Activated naive CD8-positive, alpha-beta T cell treated with anti-CD3 and anti-CD28 coated beads, Interleukin-2, amount 10 ng/mL, durations not matched to agents 7 days and 5 days (primary cell): ENCODE measurements at regions of chr4 and their contacts with region 1.

Region 1: GRCh38 chr4:67545199-67546003 is at the start of gene CENPC:
- DNase-seq: peak; percentile 89
- ATAC-seq: peak; percentile 97
- H3K4me3 Mint-ChIP-seq: peak within 1 kb of the TSS; percentile 99
- H3K27ac Mint-ChIP-seq: peak within 1 kb of the TSS; percentile 99
- H3K4me1 Mint-ChIP-seq: peaks cover 28% of the 10 kb centered on the region
- H3K27me3 Mint-ChIP-seq: peaks cover 2% of the 10 kb centered on the region
- total RNA-seq, gene CENPC: 50.0 to 50.6 TPM

Region 2: DNA sequence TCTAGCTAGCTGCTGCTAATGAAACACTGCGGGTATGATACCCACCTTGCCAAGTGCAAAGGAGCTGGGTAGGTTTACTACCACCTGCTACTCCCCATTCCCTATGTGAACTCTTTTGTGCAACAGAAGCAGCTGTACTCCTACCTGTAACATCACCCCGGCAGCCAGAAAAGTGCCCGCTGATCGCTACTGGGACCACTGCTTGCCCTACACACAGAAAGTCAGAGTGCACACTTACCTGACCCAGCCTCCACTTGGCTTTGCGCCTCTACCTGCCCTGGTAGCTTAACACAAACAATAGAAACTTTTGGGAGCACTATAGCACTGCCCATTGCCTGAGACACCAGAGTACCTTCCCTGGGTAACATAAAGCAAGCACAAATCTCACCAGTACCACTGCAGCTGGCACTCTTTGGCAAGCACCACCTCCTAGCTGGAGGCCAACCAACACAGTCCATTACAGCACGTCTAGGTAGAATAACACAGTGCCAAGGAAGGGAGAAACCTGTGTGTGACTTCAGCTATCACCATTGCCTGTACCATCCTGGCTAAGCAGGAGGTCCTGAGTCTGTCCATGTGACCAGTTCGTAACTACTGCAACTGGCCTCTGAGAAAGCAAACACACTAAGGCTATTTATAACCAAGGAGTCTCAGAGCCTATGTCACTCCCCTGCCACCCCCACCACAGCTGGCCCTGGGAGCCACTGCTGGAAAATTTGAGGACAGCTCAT is 80.2 kb before region 1 on chr4:
- POLR2A ChIA-PET with region 1: no interaction called
- DNase-seq: no peak
- ATAC-seq: no peak
- H3K4me3 Mint-ChIP-seq: no peak overlapping the region
- H3K27ac Mint-ChIP-seq: no peak overlapping the region
- H3K4me1 Mint-ChIP-seq: no peaks in the 10 kb centered on the region
- H3K27me3 Mint-ChIP-seq: no peaks in the 10 kb centered on the region

Region 3: DNA sequence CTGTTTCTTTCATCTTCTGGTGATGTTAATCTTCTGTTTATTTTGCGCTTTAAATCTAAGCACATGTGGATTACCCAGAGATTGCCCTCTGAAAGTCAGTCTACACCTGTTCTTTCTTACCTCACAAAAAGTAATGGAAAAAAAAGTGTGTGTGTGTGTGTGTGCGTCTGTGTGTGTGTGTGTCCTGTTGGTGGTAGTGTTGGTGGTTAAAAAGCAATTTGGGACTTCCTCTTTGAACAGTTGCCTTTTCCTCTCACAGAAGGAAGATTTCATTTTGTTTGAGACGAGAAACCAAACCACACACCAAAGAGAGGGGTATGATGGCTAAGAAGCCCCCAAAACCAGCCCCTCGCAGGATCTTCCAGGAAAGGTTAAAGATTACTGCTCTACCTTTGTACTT is 13.1 kb after region 1 on chr4 and contains the start of gene STAP1:
- POLR2A ChIA-PET with region 1: interaction called, 18 read pairs
- DNase-seq: no peak
- ATAC-seq: peak; percentile 76
- H3K4me3 Mint-ChIP-seq: peak within 1 kb of the TSS; percentile 94
- H3K27ac Mint-ChIP-seq: peak within 1 kb of the TSS; percentile 92
- H3K4me1 Mint-ChIP-seq: peaks cover 38% of the 10 kb centered on the region
- H3K27me3 Mint-ChIP-seq: no peaks in the 10 kb centered on the region
- total RNA-seq, gene STAP1: 27.8 to 28.4 TPM

Region 4: DNA sequence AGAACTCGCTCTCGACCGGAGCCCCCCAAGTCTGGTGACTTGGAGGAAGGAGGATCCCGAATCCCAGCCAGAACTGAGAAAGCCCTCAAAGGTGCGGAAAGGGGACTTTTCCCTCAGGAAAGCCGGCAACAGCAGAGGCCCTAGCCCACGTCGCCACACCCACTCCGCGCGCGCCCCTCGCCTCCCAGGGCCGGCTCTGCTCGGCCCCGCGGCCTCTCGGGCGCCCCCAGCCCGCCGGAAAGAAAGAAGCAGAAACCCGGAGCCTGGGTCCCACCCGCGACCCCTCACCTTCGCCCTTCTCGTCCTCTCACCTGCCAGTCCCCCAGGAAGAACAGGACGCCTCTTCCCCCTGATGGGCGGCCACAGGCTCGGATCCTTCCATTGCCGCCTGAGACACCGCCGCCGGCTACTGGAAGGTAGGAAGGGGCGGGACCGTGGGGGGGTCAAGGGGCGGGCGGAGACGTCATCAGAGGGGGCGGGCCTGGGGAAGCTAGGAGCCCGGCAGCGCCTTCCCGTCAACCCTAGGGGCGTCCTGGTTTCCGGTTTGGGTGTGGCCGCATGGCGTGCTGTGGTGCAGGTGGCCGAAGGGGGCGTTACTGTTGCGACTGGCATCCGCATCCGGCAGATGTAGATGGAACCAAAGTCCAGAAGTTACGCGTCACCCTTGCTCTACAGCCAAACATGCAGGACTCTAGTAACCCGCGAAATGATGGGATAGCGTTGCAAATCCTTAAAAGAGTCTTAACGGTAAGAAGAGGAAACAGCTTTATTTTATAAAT is 155.5 kb after region 1 on chr4 and contains the start of gene UBA6:
- POLR2A ChIA-PET with region 1: interaction called, 14 read pairs
- DNase-seq: peak; percentile 95
- ATAC-seq: peak; percentile 95
- H3K4me3 Mint-ChIP-seq: peak within 1 kb of the TSS; percentile 98
- H3K27ac Mint-ChIP-seq: peak within 1 kb of the TSS; percentile 98
- H3K4me1 Mint-ChIP-seq: peaks cover 53% of the 10 kb centered on the region
- H3K27me3 Mint-ChIP-seq: no peaks in the 10 kb centered on the region
- total RNA-seq, gene UBA6: 64.8 to 65.2 TPM